ENCODE measurements at regions of chr7 and their contacts with region 1.

Region 1: DNA sequence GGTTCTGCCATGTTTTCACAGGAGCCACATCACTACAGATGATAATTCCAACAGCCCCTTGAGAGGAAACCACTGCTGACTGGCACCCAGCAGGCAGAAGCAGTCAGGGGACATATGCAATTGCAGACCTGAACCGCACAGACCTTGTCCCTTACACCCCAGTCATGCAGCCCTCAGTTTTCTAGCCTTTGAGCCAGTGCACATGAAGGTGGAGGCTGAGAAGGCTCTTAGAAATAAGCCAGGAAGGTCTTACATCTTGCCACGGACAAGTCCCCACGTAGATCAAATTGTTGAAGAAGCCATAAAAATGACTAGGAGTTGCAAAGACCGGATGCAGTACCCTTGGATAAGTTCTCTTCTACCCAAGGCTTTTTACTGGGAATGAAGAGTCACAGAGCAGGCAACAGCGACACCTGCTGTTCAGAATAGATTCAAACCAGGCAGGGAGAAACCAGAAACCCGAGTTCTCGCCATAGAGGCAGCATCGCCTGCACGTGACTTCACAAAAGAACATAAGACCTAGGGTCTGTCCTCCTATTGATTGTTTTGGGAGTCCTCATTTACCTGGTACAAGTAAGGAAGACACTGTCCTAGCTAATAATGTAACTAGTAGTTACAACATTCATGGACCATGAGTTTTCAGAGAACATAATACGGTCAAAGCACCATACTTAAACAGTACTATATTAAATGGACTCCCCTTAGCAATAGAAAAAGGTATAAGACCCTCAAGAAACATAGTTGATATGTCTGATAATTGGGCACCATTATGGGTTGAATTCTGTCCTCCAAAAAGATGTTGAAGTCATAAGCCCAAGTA is 11.1 kb downstream of the STEAP1B start:
- ATAC-seq: peak; percentile 71 to 94 (median 82)
- H3K4me3 ChIP-seq: no peak overlapping the region
- H3K27ac ChIP-seq: no peak overlapping the region
- H3K4me1 ChIP-seq: no peaks in the 10 kb centered on the region

Region 2: GRCh38 chr7:22103255-22103969 is 385.4 kb before region 1 on chr7:
- in situ Hi-C with region 1: loop called in 7 of 9 experiments (anchors 5 to 10 kb)
- ATAC-seq: peak; percentile 55 to 98 (median 78)
- H3K4me3 ChIP-seq: no peak overlapping the region
- H3K27ac ChIP-seq: no peak overlapping the region
- H3K4me1 ChIP-seq: no peaks in the 10 kb centered on the region

Region 3: GRCh38 chr7:22110227-22110839 is 378.5 kb before region 1 on chr7:
- in situ Hi-C with region 1: loop called (anchors 5 to 10 kb)
- ATAC-seq: peak; percentile 74 to 98 (median 94)
- H3K4me3 ChIP-seq: no peak overlapping the region
- H3K27ac ChIP-seq: no peak overlapping the region
- H3K4me1 ChIP-seq: no peaks in the 10 kb centered on the region

Region 4: GRCh38 chr7:22319424-22320403 is 169.1 kb before region 1 on chr7:
- in situ Hi-C with region 1: loop called in 1 of 9 experiments (anchors 25 kb)
- ATAC-seq: peak in 5 of 8 experiments; percentile 31 to 87 (median 81)
- H3K4me3 ChIP-seq: no peak overlapping the region
- H3K27ac ChIP-seq: no peak overlapping the region
- H3K4me1 ChIP-seq: peaks cover 7 to 10% of the 10 kb centered on the region in 2 donors

Measured in motor neuron (in vitro differentiated cells).